Activated CD4-positive, alpha-beta T cell treated with anti-CD3 and anti-CD28 coated beads, Interleukin-2, amount 10 ng/mL, durations not matched to agents 24 days and 14 days (primary cell): ENCODE measurements at regions of chr22 and their contacts with region 1.

Region 1: GRCh38 chr22:46674367-46674781 is 54.2 kb downstream of the GRAMD4 start:
- DNase-seq: peak; percentile 96
- H3K4me3 Mint-ChIP-seq: peak overlapping the region; percentile 91
- H3K27ac Mint-ChIP-seq: peak overlapping the region; percentile 95
- H3K4me1 Mint-ChIP-seq: peaks cover 30% of the 10 kb centered on the region
- H3K27me3 Mint-ChIP-seq: no peaks in the 10 kb centered on the region

Region 2: DNA sequence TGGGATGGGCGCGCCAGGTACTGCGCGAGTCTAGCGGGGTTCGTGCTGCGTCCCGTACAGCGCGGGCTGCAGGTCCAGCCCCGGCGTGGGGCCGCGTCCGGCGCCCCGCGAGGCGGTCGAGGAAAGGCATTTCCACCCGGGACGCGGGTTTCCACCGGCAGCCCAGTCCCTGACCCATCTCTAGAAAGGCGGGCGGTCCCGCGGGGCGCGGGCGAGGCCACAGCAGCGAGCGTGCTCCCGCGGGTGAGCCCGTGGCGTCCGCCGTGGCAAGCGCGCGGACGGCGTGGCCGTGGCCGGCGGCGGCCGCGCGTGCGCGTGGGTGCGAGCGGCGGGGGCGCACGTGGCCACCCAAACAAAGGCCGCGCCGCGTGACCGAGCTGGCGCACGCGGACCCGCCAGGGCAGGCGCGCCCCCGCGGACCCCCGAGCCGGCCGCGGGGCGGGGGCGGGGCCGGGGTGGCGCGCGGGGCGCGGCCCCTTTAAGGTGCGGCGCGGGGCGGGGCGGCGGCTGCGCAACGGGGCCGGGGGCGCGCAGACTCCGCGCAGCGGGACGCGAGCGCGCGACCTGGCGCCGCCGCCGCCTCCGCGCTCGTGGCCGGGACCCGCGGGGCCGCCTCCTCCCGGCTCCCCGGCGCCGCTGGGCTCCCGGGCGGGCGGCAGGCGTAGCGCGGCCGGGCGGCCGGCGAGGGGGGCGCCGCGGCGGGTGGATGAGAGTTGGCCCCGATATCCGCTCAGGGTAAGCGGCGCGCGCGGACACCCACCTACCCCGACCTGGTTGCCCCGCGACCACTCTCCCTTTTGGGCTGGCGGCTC is 97.6 kb before region 1 on chr22:
- intact Hi-C with region 1: loop called (anchors 2 kb)
- DNase-seq: peak; percentile 90
- H3K4me3 Mint-ChIP-seq: peak overlapping the region; percentile 83
- H3K27ac Mint-ChIP-seq: no peak overlapping the region
- H3K4me1 Mint-ChIP-seq: peaks cover 44% of the 10 kb centered on the region
- H3K27me3 Mint-ChIP-seq: no peaks in the 10 kb centered on the region

Region 3: GRCh38 chr22:46604306-46604690 is 70.1 kb before region 1 on chr22:
- intact Hi-C with region 1: loop called (anchors 1 kb)
- DNase-seq: peak; percentile 90
- H3K4me3 Mint-ChIP-seq: peak overlapping the region; percentile 86
- H3K27ac Mint-ChIP-seq: peak overlapping the region; percentile 96
- H3K4me1 Mint-ChIP-seq: peaks cover 13% of the 10 kb centered on the region
- H3K27me3 Mint-ChIP-seq: no peaks in the 10 kb centered on the region

Region 4: GRCh38 chr22:46652847-46653331 is 21.5 kb before region 1 on chr22:
- intact Hi-C with region 1: loop called (anchors 1 kb)
- DNase-seq: no peak
- H3K4me3 Mint-ChIP-seq: peak overlapping the region; percentile 25
- H3K27ac Mint-ChIP-seq: peak overlapping the region; percentile 94
- H3K4me1 Mint-ChIP-seq: peaks cover 34% of the 10 kb centered on the region
- H3K27me3 Mint-ChIP-seq: no peaks in the 10 kb centered on the region

Region 5: GRCh38 chr22:46737976-46738646 is 63.7 kb after region 1 on chr22 and contains the start of gene CERK:
- intact Hi-C with region 1: loop called (anchors 2 kb)
- DNase-seq: peak; percentile 92
- H3K4me3 Mint-ChIP-seq: peak within 1 kb of the TSS; percentile 99
- H3K27ac Mint-ChIP-seq: peak within 1 kb of the TSS; percentile 97
- H3K4me1 Mint-ChIP-seq: peaks cover 34% of the 10 kb centered on the region
- H3K27me3 Mint-ChIP-seq: no peaks in the 10 kb centered on the region
- total RNA-seq, gene CERK: 62.8 and 63.2 TPM in 2 replicates